Aorta (tissue), 5 donors: ENCODE measurements at regions of chr6 and their contacts with region 1.

Region 1: GRCh38 chr6:50461696-50462095 is 251.6 kb upstream of the TFAP2D start:
- DNase-seq: no peak
- ATAC-seq: no peak
- H3K4me3 ChIP-seq: no peak overlapping the region
- H3K27ac ChIP-seq: no peak overlapping the region
- H3K4me1 ChIP-seq: no peaks in the 10 kb centered on the region
- H3K27me3 ChIP-seq: no peaks in the 10 kb centered on the region

Region 2: DNA sequence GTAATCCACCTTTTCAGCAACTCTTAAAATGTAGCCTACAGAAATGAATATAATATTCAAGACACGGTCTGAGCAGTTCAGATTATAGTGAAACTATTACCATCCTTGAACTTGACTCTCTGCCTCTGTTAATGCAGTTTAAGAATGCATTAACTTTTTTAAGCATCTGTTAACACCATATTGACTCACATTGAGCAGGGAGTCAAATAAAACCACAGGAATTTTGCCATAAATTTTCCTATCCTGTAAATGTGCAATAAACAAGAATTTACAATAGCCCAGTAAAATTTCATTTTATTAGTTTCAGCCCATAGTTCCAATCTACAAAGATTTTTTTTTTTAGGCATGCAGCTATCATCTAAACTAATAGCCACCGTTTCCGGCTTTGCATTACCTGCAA is 172.8 kb before region 1 on chr6:
- intact Hi-C with region 1: loop called in 1 of 2 experiments (anchors 5 kb)
- DNase-seq: no peak
- ATAC-seq: no peak
- H3K4me3 ChIP-seq: no peak overlapping the region
- H3K27ac ChIP-seq: no peak overlapping the region
- H3K4me1 ChIP-seq: no peaks in the 10 kb centered on the region
- H3K27me3 ChIP-seq: no peaks in the 10 kb centered on the region

Region 3: GRCh38 chr6:50390416-50390815 is 71.3 kb before region 1 on chr6:
- intact Hi-C with region 1: no loop called
- DNase-seq: no peak
- ATAC-seq: no peak
- H3K4me3 ChIP-seq: no peak overlapping the region
- H3K27ac ChIP-seq: no peak overlapping the region
- H3K4me1 ChIP-seq: no peaks in the 10 kb centered on the region
- H3K27me3 ChIP-seq: no peaks in the 10 kb centered on the region

Region 4: DNA sequence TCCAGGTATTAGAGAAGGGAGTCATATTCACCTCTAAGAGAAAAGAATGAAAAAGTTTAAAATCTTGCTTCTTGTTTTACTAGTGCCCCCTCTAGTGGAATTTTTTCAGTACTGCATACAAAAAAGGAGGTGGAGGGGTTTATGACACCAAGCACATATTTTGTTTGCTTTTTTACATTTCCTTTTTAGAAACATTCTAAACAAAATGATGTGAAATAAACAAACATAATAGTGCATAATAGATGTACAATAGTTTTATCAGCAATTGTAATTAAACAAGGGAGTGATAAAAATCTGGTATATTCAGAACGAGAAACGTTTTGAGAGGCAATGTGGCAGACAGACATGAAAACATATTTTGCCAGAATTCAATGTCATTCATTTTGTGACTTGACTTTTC is 140.6 kb after region 1 on chr6:
- intact Hi-C with region 1: no loop called
- DNase-seq: no peak
- ATAC-seq: no peak
- H3K4me3 ChIP-seq: no peak overlapping the region
- H3K27ac ChIP-seq: no peak overlapping the region
- H3K4me1 ChIP-seq: no peaks in the 10 kb centered on the region
- H3K27me3 ChIP-seq: no peaks in the 10 kb centered on the region

Region 5: GRCh38 chr6:50762798-50763197 is 301.1 kb after region 1 on chr6:
- intact Hi-C with region 1: no loop called
- DNase-seq: no peak
- ATAC-seq: no peak
- H3K4me3 ChIP-seq: no peak overlapping the region
- H3K27ac ChIP-seq: no peak overlapping the region
- H3K4me1 ChIP-seq: no peaks in the 10 kb centered on the region
- H3K27me3 ChIP-seq: no peaks in the 10 kb centered on the region